Body of pancreas (tissue), 4 donors: ENCODE measurements at regions of chr1 and their contacts with region 1.

Region 1: DNA sequence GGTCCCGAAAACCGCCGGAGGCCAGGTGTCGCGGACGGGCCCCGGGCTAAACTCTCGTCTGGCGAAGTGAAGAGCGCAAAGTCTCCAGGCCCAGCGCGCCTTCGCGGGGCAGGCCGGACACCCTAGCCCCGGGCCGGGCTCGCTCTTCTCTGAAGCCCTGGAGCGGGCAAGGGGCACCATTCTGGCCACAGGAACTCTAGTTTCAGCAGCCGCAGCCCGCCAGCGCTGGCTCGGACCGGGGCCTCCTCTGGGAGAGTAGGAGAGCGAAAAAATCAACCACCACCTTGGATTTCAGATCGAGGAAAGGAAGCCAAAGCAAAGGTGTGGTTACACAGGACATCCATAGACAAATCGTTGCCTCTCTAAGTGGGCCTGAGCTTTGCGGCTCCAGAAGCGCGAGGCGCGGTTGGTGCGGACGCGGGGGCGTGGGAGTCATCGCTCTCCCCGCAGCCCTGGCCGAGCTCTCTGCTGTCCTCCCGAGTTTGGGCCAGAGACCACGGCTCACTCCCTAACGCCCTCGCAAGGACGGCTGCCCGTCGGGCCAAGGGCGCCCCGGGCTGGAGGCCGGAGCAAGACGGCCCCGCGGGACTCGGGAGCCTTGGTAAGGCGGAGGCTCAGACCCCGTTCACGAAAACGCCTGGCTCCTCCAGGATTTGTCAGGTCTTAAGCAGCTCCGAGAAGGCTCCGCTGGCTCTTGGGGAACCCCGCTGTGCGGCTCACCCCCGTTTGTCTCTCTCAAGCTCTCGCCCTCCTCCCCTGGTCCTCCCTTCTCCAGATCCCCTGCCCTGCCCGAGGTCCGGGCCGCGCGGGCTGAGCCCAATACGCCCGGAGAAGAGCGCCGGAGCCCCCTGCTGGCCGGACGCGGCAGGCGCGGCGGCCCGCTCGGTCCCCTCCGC is 132.9 kb upstream of the DPYD start:
- DNase-seq: peak; percentile 42 to 64 (median 46)
- ATAC-seq: peak; percentile 91
- H3K4me3 ChIP-seq: peak overlapping the region in 1 of 2 donors; percentile 18
- H3K27ac ChIP-seq: no peak overlapping the region
- H3K4me1 ChIP-seq: peaks cover 13% of the 10 kb centered on the region
- H3K27me3 ChIP-seq: peaks cover 0 to 27% of the 10 kb centered on the region in 2 donors
- CTCF ChIP-seq: peak; percentile 46 to 94 (median 76)
- POLR2A ChIP-seq: no peak

Region 2: DNA sequence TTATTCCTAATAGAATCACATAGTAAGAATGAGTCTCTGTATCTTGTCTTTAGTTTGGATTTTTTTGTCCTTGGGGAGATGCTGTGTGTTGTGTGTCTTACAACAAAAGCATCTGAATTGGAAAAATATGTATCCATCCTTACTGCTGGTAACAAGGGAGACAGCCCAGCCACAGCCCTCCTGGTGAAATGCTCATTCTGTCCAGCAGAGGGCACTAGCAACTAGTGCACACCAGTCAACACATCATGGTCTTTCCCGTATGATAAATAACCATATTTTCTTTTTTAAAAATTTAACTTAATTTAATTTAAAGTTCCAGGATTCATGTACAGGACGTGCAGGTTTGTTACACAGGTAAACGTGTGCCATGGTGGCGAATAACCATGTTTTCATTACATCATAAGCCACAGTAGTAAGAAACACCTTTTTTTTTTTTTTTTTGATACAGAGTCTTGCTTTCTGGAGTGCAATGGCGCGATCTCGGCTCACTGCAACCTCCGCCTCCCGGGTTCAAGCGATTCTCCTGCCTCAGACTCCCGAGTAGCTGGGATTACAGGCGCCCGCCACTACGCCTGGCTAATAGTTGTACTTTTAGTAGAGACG is 1087.1 kb before region 1 on chr1:
- intact Hi-C with region 1: loop called (anchors 10 kb)
- DNase-seq: peak; percentile 70 to 83 (median 74)
- ATAC-seq: peak; percentile 71
- H3K4me3 ChIP-seq: no peak overlapping the region
- H3K27ac ChIP-seq: no peak overlapping the region
- H3K4me1 ChIP-seq: no peaks in the 10 kb centered on the region
- H3K27me3 ChIP-seq: no peaks in the 10 kb centered on the region
- CTCF ChIP-seq: peak; percentile 69 to 93 (median 74)
- POLR2A ChIP-seq: no peak